Caco-2 (cell line): ENCODE measurements at regions of chr2 and their contacts with region 1.

Region 1: GRCh38 chr2:20675701-20676352 is 8.9 kb downstream of the GDF7 start:
- DNase-seq: peak; percentile 79 to 80
- H3K4me3 ChIP-seq: no peak overlapping the region
- H3K4me3 Mint-ChIP-seq: peak overlapping the region; percentile 42
- H3K27ac Mint-ChIP-seq: peak overlapping the region; percentile 69
- H3K4me1 ChIP-seq: peaks cover 15% of the 10 kb centered on the region
- H3K4me1 Mint-ChIP-seq: peaks cover 25% of the 10 kb centered on the region
- H3K27me3 ChIP-seq: no peaks in the 10 kb centered on the region
- H3K27me3 Mint-ChIP-seq: no peaks in the 10 kb centered on the region
- CTCF ChIP-seq: peak in 1 of 2 experiments; percentile 32

Region 2: GRCh38 chr2:20642055-20642971 is 33.5 kb before region 1 on chr2:
- CTCF ChIA-PET with region 1: interaction called, 10 read pairs
- POLR2A ChIA-PET with region 1: no interaction called
- intact Hi-C with region 1: no loop called
- DNase-seq: peak; percentile 64 to 88
- H3K4me3 ChIP-seq: no peak overlapping the region
- H3K4me3 Mint-ChIP-seq: no peak overlapping the region
- H3K27ac Mint-ChIP-seq: no peak overlapping the region
- H3K4me1 ChIP-seq: no peaks in the 10 kb centered on the region
- H3K4me1 Mint-ChIP-seq: no peaks in the 10 kb centered on the region
- H3K27me3 ChIP-seq: no peaks in the 10 kb centered on the region
- H3K27me3 Mint-ChIP-seq: no peaks in the 10 kb centered on the region
- CTCF ChIP-seq: peak; percentile 97 to 99

Region 3: DNA sequence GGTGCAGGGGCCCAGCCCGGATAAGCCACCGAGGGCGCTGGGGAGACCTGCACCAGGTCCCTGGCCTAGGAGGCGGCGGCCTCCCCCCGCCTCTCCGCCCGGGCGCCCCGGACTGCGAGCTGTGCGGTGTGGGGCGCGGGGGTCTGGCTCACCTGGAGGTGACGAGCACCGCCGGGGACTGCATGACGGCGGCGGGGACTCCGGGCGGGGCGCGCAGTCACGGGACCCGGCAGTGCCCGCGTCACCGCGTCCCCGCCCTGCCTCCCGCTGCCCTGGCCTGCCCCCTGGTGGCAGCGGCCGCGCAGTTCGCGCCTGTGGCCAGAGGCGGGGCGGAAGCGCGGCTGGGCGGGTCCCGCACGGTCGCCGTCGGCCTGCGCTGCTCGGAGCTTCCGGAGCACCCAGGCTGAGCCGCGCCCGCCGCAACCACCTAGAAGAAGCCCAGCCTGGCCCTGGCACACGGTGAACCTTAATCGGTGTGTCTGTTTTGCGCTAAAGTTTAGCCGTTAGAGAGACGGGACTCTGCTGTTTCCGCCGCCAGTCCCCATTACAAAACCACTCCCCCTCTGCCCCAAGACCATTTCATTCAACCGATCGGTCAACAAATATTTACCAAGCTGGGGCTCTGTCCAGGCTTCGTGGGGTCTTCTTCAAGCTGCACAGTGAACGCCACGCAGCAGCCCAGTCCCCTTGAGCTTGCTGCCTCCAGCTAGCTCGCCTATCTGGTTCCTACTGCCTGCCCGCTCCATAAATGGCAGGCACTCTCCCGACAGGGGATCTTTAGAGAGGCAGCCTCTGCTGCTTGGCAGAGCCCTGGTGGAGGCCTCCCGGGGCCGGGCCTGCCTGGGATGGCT is 24.7 kb before region 1 on chr2 and contains the start of gene HS1BP3:
- CTCF ChIA-PET with region 1: interaction called, 26 read pairs
- POLR2A ChIA-PET with region 1: interaction called, 6 read pairs
- intact Hi-C with region 1: no loop called
- DNase-seq: peak; percentile 80 to 96
- H3K4me3 ChIP-seq: peak within 1 kb of the TSS; percentile 92
- H3K4me3 Mint-ChIP-seq: peak within 1 kb of the TSS; percentile 81
- H3K27ac Mint-ChIP-seq: peak within 1 kb of the TSS; percentile 81
- H3K4me1 ChIP-seq: peaks cover 13% of the 10 kb centered on the region
- H3K4me1 Mint-ChIP-seq: peaks cover 7% of the 10 kb centered on the region
- H3K27me3 ChIP-seq: no peaks in the 10 kb centered on the region
- H3K27me3 Mint-ChIP-seq: no peaks in the 10 kb centered on the region
- CTCF ChIP-seq: peak; percentile 55 to 95
- total RNA-seq, gene HS1BP3: 26.5 and 31.1 TPM in 2 replicates

Region 4: DNA sequence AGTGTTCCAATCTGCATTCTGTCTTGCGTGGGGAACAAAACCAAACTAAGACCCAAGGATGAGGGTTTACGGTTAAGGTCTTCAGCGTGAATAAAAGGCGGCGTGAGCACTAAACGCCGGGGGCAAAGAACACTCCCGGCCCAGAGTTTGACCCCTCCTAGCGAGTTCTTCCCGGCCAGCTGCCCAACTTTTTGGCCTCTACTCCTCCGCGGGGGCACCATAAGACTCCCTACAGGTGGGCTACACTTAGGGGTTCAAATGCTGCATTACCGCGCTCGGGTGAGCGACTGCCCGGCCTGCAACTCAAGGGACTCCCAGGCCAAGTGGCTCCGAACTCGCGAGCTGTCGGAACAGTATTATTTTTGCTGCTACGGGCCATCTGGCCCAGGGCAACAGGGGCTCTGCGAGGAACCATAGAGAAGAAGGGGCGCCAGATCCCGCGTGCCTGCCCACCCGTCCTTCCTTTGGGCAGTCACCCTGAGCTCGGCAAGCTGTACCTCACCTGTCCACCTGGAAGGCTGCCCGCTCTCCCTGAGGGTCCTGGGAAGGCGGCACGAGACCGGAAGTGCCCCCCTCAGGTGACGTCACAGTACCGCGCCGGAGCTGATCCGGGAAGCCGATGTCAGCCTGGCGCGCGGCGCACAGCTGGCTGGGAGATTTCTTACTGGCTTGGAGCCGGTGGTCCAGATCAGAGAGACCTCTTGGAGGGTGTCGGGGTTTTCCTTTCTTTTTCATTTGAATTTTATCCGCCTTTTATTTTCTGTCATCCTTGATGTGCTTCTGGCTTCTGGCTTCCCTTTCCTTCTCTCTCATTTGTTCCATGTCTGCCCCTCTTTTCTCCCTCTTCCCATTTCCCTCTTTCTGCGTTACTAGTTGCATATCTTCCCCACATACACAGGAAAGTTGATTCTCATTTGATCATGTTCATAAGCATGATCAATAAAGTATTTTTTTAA is 147.0 kb after region 1 on chr2 and contains the start of gene LDAH:
- CTCF ChIA-PET with region 1: interaction called, 12 read pairs
- POLR2A ChIA-PET with region 1: interaction called, 7 read pairs
- intact Hi-C with region 1: loop called (anchors 5 kb)
- DNase-seq: peak; percentile 94 to 95
- H3K4me3 ChIP-seq: peak within 1 kb of the TSS; percentile 83
- H3K4me3 Mint-ChIP-seq: peak within 1 kb of the TSS; percentile 98
- H3K27ac Mint-ChIP-seq: peak within 1 kb of the TSS; percentile 99
- H3K4me1 ChIP-seq: peaks cover 13% of the 10 kb centered on the region
- H3K4me1 Mint-ChIP-seq: peaks cover 5% of the 10 kb centered on the region
- H3K27me3 ChIP-seq: no peaks in the 10 kb centered on the region
- H3K27me3 Mint-ChIP-seq: no peaks in the 10 kb centered on the region
- CTCF ChIP-seq: no peak
- total RNA-seq, gene LDAH: 37.2 and 40.5 TPM in 2 replicates

Region 5: DNA sequence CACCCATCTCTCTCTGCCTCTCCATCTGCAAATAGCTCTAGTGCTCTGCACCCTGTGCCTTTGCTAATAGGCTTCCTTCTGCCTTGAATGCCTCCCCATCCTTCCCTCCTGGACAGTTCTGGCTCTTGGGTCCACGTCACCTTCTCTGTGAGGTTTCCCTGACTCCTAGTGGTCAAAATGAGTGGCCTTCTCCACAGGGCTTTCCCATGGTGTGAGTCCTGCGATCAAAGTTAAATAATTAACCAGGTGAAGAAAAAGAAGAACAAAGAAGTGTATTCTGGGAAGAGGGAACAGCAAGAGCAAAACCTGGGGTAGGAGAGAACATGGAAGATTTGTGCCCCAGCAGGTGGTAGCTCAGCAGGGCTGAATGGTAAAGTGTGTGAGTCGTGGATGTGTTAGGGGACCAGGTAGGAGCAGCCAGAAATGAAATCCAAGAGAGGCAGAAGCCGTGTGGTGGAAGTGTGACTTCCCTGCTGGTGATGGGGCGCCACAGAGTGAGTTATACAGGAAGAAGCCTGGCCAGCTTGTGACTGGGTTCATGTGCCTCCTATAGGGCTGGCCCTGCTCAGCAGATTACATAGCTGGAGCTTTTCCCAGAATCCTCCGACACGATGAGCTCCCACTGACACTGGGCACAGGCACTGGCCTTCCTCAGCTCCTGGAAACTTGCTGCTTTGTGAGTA is 240.9 kb after region 1 on chr2:
- CTCF ChIA-PET with region 1: interaction called, 3 read pairs
- POLR2A ChIA-PET with region 1: no interaction called
- intact Hi-C with region 1: loop called (anchors 1 kb)
- DNase-seq: peak; percentile 62 to 64
- H3K4me3 ChIP-seq: no peak overlapping the region
- H3K4me3 Mint-ChIP-seq: no peak overlapping the region
- H3K27ac Mint-ChIP-seq: no peak overlapping the region
- H3K4me1 ChIP-seq: no peaks in the 10 kb centered on the region
- H3K4me1 Mint-ChIP-seq: peaks cover 7% of the 10 kb centered on the region
- H3K27me3 ChIP-seq: no peaks in the 10 kb centered on the region
- H3K27me3 Mint-ChIP-seq: peaks cover 8% of the 10 kb centered on the region
- CTCF ChIP-seq: peak; percentile 49 to 78

Region 6: GRCh38 chr2:20962939-20963557 is 287.2 kb after region 1 on chr2:
- CTCF ChIA-PET with region 1: interaction called, 22 read pairs
- POLR2A ChIA-PET with region 1: no interaction called
- intact Hi-C with region 1: loop called (anchors 1 kb)
- DNase-seq: peak; percentile 73 to 80
- H3K4me3 ChIP-seq: no peak overlapping the region
- H3K4me3 Mint-ChIP-seq: no peak overlapping the region
- H3K27ac Mint-ChIP-seq: no peak overlapping the region
- H3K4me1 ChIP-seq: no peaks in the 10 kb centered on the region
- H3K4me1 Mint-ChIP-seq: no peaks in the 10 kb centered on the region
- H3K27me3 ChIP-seq: no peaks in the 10 kb centered on the region; the same call in 1 of the 2 replicates
- H3K27me3 Mint-ChIP-seq: peaks cover 5% of the 10 kb centered on the region
- CTCF ChIP-seq: peak; percentile 83 to 90

Region 7: GRCh38 chr2:20976527-20976926 is 300.7 kb after region 1 on chr2:
- CTCF ChIA-PET with region 1: no interaction called
- POLR2A ChIA-PET with region 1: no interaction called
- intact Hi-C with region 1: no loop called
- DNase-seq: no peak
- H3K4me3 ChIP-seq: no peak overlapping the region
- H3K4me3 Mint-ChIP-seq: no peak overlapping the region
- H3K27ac Mint-ChIP-seq: no peak overlapping the region
- H3K4me1 ChIP-seq: no peaks in the 10 kb centered on the region
- H3K4me1 Mint-ChIP-seq: no peaks in the 10 kb centered on the region
- H3K27me3 ChIP-seq: peaks cover 2% of the 10 kb centered on the region; the same call in 1 of the 2 replicates
- H3K27me3 Mint-ChIP-seq: peaks cover 4% of the 10 kb centered on the region
- CTCF ChIP-seq: no peak